ENCODE measurements at regions of chr2 and their contacts with region 1.

Region 1: GRCh38 chr2:109128048-109128465 is 948 bp upstream of the SH3RF3 start:
- DNase-seq: peak; percentile 42 to 76 (median 60)
- ATAC-seq: peak; percentile 93
- H3K4me3 ChIP-seq: no peak overlapping the region
- H3K27ac ChIP-seq: no peak overlapping the region
- H3K4me1 ChIP-seq: peaks cover 0 to 6% of the 10 kb centered on the region in 2 experiments; a peak in 2 of 5 replicates
- H3K27me3 ChIP-seq: peaks cover 2 to 21% of the 10 kb centered on the region in 2 experiments; a peak in 3 of 5 replicates
- CTCF ChIP-seq: peak; percentile 61 to 68 (median 65)
- EP300 ChIP-seq: no peak
- POLR2A ChIP-seq: no peak
- RAD21 ChIP-seq: peak; percentile 49 to 75

Region 2: DNA sequence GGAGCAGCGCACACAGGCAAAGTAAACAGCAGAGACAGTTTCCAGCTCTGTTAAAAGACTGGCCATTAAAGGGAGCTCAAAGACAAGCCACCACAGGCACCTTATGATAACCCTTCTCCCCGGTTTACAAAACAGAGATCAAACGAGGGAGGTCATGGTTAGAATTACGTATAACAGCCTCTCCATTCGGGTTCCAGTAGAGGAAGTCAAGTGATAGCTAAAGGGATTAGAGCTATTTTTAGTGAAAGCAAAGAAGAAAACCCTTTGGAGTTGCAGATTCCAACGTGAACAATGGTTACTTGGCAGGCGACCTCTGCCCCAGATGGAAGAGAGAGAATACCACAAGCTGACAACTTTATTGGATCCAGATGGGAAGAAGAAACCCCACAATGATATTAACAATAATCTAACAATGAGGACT is 107.8 kb before region 1 on chr2:
- CTCF ChIA-PET with region 1: no interaction called
- POLR2A ChIA-PET with region 1: no interaction called
- in situ Hi-C with region 1: no loop called
- intact Hi-C with region 1: no loop called
- DNase-seq: no peak
- ATAC-seq: no peak
- H3K4me3 ChIP-seq: no peak overlapping the region
- H3K27ac ChIP-seq: no peak overlapping the region
- H3K4me1 ChIP-seq: 0 out of 5 replicates have a peak, but pooled peaks cover 0 to 3% of the 10 kb centered on the region in 2 experiments
- H3K27me3 ChIP-seq: peaks cover 24 to 57% of the 10 kb centered on the region in 2 experiments
- CTCF ChIP-seq: no peak
- EP300 ChIP-seq: no peak
- POLR2A ChIP-seq: no peak
- RAD21 ChIP-seq: no peak

Region 3: GRCh38 chr2:109143214-109144187 is 15.4 kb after region 1 on chr2:
- CTCF ChIA-PET with region 1: no interaction called
- POLR2A ChIA-PET with region 1: no interaction called
- in situ Hi-C with region 1: no loop called
- intact Hi-C with region 1: no loop called
- DNase-seq: no peak
- ATAC-seq: no peak
- H3K4me3 ChIP-seq: no peak overlapping the region
- H3K27ac ChIP-seq: no peak overlapping the region
- H3K4me1 ChIP-seq: no peaks in the 10 kb centered on the region
- H3K27me3 ChIP-seq: peaks cover 17 to 56% of the 10 kb centered on the region in 2 experiments; a peak in 4 of 5 replicates
- CTCF ChIP-seq: no peak
- EP300 ChIP-seq: no peak
- POLR2A ChIP-seq: no peak
- RAD21 ChIP-seq: no peak

Region 4: DNA sequence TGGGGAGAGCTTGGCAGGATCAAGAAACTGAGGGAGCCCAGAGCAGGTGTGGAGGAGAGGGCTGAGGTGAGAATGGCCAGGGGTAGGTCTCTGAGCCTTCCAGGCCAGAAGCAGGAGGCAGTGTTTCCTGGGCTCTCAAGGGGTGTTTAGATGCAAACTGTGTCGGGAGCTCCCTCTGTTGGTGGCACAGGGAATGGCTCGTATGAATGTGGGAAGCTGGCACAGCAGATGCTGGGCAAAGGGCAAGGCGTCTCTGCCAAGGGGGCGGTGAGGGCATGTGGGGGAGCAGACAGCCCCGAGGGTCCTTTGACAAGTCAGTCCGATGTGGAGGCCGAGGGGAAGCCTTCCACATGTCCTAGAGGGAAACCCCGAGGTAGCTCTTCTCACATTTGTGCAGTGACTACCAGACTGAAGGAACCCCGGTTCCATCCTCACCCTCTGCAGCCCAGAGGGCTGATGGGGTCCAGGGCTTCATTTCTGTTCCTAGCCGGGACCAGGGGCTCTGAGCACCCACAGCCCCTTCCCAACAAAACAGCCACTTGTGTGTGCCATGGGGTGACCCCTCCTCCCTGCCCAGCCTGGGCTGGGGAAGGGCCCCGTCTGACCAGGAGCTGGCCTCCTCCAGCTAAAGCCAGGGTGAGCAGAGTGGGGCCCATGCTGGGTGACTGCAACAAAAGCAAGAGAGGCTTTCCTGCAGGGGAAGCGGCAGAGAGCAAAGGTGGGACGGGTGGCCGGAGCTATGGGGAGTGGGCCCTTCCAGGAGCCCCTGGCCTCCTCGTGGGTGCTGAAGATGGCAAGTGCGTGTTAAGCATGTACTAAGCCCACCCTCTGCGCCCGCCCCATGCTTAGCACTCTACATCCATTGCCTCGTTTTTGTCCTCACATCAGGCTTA is 382.3 kb after region 1 on chr2:
- CTCF ChIA-PET with region 1: no interaction called
- POLR2A ChIA-PET with region 1: no interaction called
- in situ Hi-C with region 1: loop called (anchors 10 kb)
- intact Hi-C with region 1: loop called (anchors 1 kb)
- DNase-seq: peak; percentile 66 to 79 (median 74)
- ATAC-seq: peak; percentile 92
- H3K4me3 ChIP-seq: no peak overlapping the region
- H3K27ac ChIP-seq: no peak overlapping the region
- H3K4me1 ChIP-seq: no peaks in the 10 kb centered on the region
- H3K27me3 ChIP-seq: peaks cover 0 to 20% of the 10 kb centered on the region in 2 experiments; a peak in 2 of 5 replicates
- CTCF ChIP-seq: peak; percentile 80 to 92 (median 89)
- EP300 ChIP-seq: no peak
- POLR2A ChIP-seq: no peak
- RAD21 ChIP-seq: peak; percentile 79 to 80

Measured in K562 (cell line).